PC-9 (cell line): ENCODE measurements at regions of chr6 and their contacts with region 1.

Region 1: GRCh38 chr6:42453031-42453653 is 1.4 kb upstream of the TRERF1 start:
- DNase-seq: peak; percentile 75 to 88
- H3K4me3 ChIP-seq: peak overlapping the region; percentile 77
- H3K27ac ChIP-seq: peak overlapping the region; percentile 69
- H3K4me1 ChIP-seq: peaks cover 19% of the 10 kb centered on the region
- H3K27me3 ChIP-seq: no peaks in the 10 kb centered on the region
- CTCF ChIP-seq: no peak

Region 2: DNA sequence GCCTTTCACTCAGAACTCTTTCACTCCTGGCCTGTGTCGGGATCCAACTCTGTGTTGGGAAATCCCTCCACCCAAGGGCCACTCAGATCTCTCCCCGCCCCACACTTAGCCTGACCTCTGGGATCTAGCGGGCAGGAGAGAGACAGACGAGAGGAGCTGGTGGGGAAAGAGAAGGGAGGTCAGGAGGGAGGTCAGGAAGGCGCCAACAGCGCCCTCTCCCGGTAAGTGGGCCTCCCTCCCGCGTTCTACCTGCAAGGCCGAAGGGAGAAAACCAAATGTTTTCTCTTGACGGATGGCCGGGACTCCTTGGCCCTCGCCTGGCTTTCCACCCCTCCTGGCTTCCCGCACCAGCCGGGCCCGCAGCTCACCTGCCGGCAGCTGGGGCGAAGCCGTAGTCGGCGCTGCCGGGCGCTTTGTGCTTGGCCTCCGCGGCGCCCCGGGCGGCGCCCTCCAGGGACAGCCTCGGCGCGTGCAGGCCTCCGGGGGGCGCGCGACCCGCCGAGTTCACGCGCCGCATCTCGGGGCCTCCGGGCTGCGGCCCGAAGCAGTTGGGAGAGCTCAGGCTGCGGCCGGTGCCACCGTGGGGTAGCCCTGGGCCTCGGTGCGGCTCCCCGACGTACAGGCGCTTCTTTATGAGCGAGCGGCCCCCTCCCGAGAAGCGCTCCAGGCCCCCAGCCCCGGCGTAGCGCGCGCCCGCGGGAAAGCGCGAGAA is 348.9 kb before region 1 on chr6:
- CTCF ChIA-PET with region 1: no interaction called
- POLR2A ChIA-PET with region 1: interaction called, 16 read pairs
- intact Hi-C with region 1: no loop called
- DNase-seq: no peak
- H3K4me3 ChIP-seq: no peak overlapping the region
- H3K27ac ChIP-seq: no peak overlapping the region
- H3K4me1 ChIP-seq: peaks cover 29% of the 10 kb centered on the region
- H3K27me3 ChIP-seq: no peaks in the 10 kb centered on the region
- CTCF ChIP-seq: no peak

Region 3: DNA sequence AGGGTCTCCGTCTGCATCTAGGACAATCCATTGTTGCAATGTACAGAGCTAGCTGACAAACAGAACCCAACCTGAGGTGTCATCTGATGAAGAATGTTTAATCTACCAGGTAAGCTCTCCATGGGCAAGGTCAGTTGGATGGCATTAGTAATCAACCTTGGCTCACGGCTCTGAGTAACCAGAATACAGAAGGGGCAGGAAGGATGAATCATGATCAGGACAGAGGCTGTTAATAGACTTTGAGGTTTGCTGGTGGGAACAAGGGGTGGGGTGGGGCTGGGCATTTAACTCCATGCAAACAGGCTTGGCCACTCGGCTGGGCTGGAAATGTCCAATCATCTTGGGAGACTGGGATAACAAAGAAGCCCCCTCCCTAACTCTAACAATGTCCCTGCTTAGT is 158.4 kb before region 1 on chr6:
- CTCF ChIA-PET with region 1: no interaction called
- POLR2A ChIA-PET with region 1: no interaction called
- intact Hi-C with region 1: loop called (anchors 2 kb)
- DNase-seq: peak; percentile 67 to 97
- H3K4me3 ChIP-seq: no peak overlapping the region
- H3K27ac ChIP-seq: peak overlapping the region; percentile 91
- H3K4me1 ChIP-seq: peaks cover 69% of the 10 kb centered on the region
- H3K27me3 ChIP-seq: no peaks in the 10 kb centered on the region
- CTCF ChIP-seq: no peak

Region 4: DNA sequence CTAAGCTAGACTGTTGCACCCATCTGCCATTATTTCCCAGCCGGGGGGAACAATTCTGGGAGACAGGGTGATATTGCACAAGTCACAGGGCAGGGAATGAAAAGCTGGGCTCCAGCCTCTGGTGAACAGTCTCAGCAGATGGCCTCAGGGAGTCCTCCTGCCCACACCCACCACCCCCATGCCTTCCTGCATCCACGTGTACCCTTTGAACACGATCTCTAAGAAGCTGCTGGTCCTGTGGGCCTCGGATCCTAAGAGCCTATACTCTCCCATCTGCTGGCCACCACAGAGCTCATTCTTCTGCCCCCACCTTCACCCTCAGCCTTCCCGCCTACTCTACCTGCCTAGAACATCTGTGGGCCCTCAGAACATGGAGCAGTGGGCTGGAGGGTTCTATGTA is 61.7 kb before region 1 on chr6:
- CTCF ChIA-PET with region 1: no interaction called
- POLR2A ChIA-PET with region 1: interaction called, 11 read pairs
- intact Hi-C with region 1: no loop called
- DNase-seq: no peak
- H3K4me3 ChIP-seq: no peak overlapping the region
- H3K27ac ChIP-seq: no peak overlapping the region
- H3K4me1 ChIP-seq: no peaks in the 10 kb centered on the region
- H3K27me3 ChIP-seq: no peaks in the 10 kb centered on the region
- CTCF ChIP-seq: no peak

Region 5: DNA sequence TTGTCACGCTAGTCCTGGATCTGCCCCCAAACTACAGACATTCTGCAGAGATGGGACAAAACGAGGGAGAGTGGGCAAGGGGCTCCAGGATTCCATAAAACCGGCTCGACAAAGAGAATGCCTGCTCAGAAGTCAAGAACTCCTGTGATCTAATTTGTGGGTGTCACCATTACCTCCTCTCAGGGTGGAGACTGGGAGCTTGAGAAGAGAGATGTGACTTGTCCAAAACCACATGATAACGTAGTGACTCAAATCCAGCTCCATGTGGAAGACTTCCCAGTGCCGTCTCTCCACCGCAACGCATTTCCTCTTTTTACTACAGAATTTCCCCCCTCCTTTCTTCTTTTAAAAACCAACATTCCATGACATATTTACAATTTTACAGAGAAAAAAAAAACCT is 45.8 kb before region 1 on chr6:
- CTCF ChIA-PET with region 1: no interaction called
- POLR2A ChIA-PET with region 1: interaction called, 27 read pairs
- intact Hi-C with region 1: loop called (anchors 1 kb)
- DNase-seq: peak in 1 of 2 experiments; percentile 39
- H3K4me3 ChIP-seq: no peak overlapping the region
- H3K27ac ChIP-seq: peak overlapping the region; percentile 18; the same call in 1 of the 2 replicates
- H3K4me1 ChIP-seq: peaks cover 53% of the 10 kb centered on the region
- H3K27me3 ChIP-seq: no peaks in the 10 kb centered on the region
- CTCF ChIP-seq: no peak

Region 6: DNA sequence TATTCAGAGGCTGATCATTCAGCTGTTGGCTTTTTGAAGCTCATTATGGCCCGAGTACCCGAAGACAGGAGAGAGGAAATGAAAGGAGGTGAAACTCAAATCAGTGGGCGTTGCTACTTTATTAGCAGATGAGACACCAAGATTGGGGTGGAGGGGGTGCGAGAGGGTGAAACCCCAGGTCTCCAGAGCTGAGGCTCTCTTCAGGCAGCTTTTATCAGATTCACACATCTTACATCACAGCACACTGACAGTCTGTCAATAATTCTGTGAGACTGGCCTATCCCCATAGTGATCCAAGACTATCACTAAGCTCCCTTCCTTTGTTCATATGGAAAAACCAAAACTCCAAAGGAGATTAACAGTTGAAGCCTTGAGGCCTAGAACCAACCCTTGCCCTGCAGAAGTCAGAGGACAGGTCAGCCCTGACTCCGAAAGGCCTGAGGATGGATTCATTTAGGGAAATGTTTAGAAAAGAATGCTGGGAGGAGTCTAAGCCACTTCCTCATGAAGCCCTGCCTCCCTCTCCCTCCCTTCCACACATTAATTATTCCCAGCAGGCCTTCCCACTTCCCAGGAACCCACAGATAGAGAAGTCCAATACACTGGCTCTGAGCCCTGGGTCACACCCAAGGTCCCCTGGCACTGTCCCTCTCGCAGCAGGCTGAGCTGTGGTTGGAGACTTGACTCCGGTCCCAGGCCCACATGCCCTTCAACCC is 24.7 kb before region 1 on chr6:
- CTCF ChIA-PET with region 1: no interaction called
- POLR2A ChIA-PET with region 1: no interaction called
- intact Hi-C with region 1: no loop called
- DNase-seq: no peak
- H3K4me3 ChIP-seq: no peak overlapping the region
- H3K27ac ChIP-seq: no peak overlapping the region
- H3K4me1 ChIP-seq: no peaks in the 10 kb centered on the region
- H3K27me3 ChIP-seq: no peaks in the 10 kb centered on the region
- CTCF ChIP-seq: no peak

Region 7: GRCh38 chr6:42440778-42441696 is 12.1 kb before region 1 on chr6:
- CTCF ChIA-PET with region 1: no interaction called
- POLR2A ChIA-PET with region 1: interaction called, 16 read pairs
- intact Hi-C with region 1: no loop called
- DNase-seq: no peak
- H3K4me3 ChIP-seq: no peak overlapping the region
- H3K27ac ChIP-seq: no peak overlapping the region
- H3K4me1 ChIP-seq: peaks cover 8% of the 10 kb centered on the region
- H3K27me3 ChIP-seq: no peaks in the 10 kb centered on the region
- CTCF ChIP-seq: no peak

Region 8: DNA sequence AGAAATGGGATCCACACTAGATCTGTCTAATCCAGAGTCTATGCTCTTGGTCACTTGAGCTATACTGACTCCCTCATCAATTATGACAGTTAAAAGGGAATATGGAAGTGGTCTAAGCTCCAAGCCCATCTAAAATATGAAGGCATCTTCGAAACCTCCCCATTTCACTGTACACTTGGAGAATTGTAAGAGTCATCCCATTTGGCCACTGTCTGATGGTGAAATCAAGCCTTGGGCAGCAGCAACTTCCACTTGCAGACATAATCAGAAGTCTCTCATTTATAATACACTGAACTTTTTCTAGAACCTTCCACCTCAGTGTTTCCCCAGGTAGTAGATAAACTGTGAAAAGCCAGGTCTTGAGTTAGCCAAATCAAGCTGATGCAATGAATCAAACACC is 84.4 kb after region 1 on chr6:
- CTCF ChIA-PET with region 1: no interaction called
- POLR2A ChIA-PET with region 1: interaction called, 18 read pairs
- intact Hi-C with region 1: loop called (anchors 5 kb)
- DNase-seq: no peak
- H3K4me3 ChIP-seq: no peak overlapping the region
- H3K27ac ChIP-seq: no peak overlapping the region
- H3K4me1 ChIP-seq: no peaks in the 10 kb centered on the region
- H3K27me3 ChIP-seq: no peaks in the 10 kb centered on the region
- CTCF ChIP-seq: no peak